Heart left ventricle (tissue), 16 donors: ENCODE measurements at regions of chr5 and their contacts with region 1.

Region 1: GRCh38 chr5:139745800-139746690 is 49.6 kb upstream of the PSD2 start:
- DNase-seq: peak; percentile 69 to 72 (median 72)
- ATAC-seq: peak; percentile 53 to 81 (median 73)
- H3K4me3 ChIP-seq: peak overlapping the region; percentile 9 to 58 (median 50)
- H3K27ac ChIP-seq: peak overlapping the region in 3 of 12 donors; percentile 18 to 58 (median 38)
- H3K4me1 ChIP-seq: peaks cover 16 to 36% (median 32%) of the 10 kb centered on the region in 12 donors
- H3K27me3 ChIP-seq: peaks cover 0 to 42% (median 25%) of the 10 kb centered on the region in 9 donors
- CTCF ChIP-seq: no peak
- POLR2A ChIP-seq: no peak

Region 2: DNA sequence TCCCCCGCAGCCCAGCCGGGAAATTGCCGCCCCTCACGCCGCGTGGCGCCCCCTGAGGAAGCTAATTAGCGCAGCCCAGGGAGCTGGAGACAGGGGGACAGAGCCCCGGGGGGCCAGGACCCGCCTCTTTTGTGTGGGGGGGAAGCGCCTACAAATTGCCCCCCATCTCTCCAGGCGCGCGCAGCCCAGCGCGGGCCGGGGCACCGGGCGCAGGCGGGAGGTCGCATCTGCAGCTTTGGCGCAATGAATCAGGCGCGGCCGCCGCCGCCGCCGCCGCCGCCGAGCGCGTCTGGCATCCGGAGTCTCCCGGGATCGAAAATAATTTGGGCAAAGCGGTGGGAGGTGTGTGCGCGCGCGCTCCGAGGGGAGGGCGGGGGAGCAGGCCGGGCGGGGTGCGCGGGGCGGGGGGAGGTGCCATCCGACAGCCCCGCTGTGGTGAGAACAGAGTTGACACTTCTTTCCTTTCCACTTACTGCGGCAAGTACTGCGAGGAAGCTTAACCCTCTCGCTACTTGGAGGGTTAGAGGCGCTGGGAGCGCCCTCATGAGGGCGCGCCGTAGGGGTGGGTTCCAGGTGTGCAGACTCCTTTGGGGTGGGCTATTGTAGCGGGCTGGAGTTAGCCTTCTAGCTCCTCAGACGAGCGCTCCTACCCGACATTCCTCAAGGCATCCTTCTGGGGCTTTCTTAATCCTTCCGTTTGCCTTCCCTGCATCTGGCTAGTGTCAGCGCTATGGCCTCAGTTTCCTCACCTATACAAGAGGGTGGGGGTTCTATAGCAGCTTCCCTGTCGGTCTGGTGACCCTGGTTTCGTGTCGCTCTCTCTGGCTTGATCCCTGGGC is 34.8 kb before region 1 on chr5:
- intact Hi-C with region 1: loop called in 3 of 10 experiments (anchors 2 to 5 kb)
- DNase-seq: peak in 3 of 5 donors; percentile 47 to 56 (median 51)
- ATAC-seq: peak in 2 of 4 donors; percentile 16 to 24
- H3K4me3 ChIP-seq: peak overlapping the region; percentile 33 to 65 (median 58)
- H3K27ac ChIP-seq: peak overlapping the region in 9 of 12 donors; percentile 24 to 88 (median 77)
- H3K4me1 ChIP-seq: peaks cover 14 to 37% (median 33%) of the 10 kb centered on the region in 12 donors
- H3K27me3 ChIP-seq: peaks cover 0 to 26% (median 0%) of the 10 kb centered on the region in 9 donors
- CTCF ChIP-seq: peak in 3 of 12 donors; percentile 4 to 12 (median 6)
- POLR2A ChIP-seq: no peak